Left colon (tissue), 2 donors: ENCODE measurements at regions of chr12 and their contacts with region 1.

Region 1: GRCh38 chr12:10562306-10562933 is 51.0 kb downstream of the MAGOHB start:
- DNase-seq: no peak
- ATAC-seq: no peak

Region 2: GRCh38 chr12:10235761-10236631 is 326.4 kb before region 1 on chr12:
- intact Hi-C with region 1: loop called (anchors 5 to 10 kb)
- DNase-seq: peak in 1 of 2 donors; percentile 33
- ATAC-seq: peak; percentile 59

Region 3: DNA sequence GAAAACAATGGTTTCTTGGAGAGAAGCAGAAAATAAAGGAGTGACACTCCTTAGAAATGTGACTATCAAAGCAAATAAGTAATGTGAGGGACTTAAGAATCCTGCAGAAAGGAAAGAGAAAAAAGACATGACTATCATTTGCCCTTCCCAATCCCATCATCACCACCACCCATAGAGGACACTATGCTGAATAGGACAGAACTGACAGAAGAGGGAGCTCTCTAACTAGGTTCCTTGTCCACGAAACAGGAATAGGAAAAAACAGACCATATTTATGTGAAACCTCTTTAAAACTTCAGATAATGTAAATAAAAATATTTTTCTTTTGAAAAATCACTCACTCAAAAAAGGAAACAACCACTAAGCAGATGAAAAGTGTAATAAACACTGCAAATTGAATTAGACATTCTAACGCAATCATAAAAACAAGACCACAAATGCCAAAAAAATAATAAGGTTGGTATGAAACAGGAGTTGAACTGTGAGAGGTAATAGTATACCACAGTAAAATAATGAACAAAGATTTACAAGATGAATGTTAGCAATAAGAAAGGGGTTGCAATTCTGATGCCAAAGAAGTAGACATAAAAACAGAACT is 230.7 kb before region 1 on chr12:
- intact Hi-C with region 1: loop called (anchors 2 to 5 kb)
- DNase-seq: no peak
- ATAC-seq: peak; percentile 83